CD4-positive, alpha-beta T cell (primary cell): ENCODE measurements at regions of chr11 and their contacts with region 1.

Region 1: DNA sequence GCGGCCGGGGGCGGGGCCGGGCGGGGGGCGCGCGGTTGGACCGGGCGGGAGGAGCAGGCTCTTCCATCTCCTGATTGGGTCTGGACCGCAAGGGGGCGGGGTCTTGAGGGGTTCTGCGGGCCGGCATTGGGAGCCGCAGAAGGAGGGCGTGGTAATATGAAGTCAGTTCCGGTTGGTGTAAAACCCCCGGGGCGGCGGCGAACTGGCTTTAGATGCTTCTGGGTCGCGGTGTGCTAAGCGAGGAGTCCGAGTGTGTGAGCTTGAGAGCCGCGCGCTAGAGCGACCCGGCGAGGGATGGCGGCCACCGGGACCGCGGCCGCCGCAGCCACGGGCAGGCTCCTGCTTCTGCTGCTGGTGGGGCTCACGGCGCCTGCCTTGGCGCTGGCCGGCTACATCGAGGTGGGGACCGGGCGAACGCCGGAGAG is at the start of gene APLP2:
- DNase-seq: peak; percentile 92 to 99 (median 97)
- ATAC-seq: peak; percentile 92
- H3K4me3 ChIP-seq: peak within 1 kb of the TSS; percentile 64
- H3K4me3 Mint-ChIP-seq: peak within 1 kb of the TSS; percentile 99
- H3K27ac ChIP-seq: peak within 1 kb of the TSS; percentile 58 to 78
- H3K27ac Mint-ChIP-seq: peak within 1 kb of the TSS; percentile 92
- H3K4me1 ChIP-seq: peaks cover 20% of the 10 kb centered on the region
- H3K4me1 Mint-ChIP-seq: peaks cover 27% of the 10 kb centered on the region
- H3K27me3 ChIP-seq: no peaks in the 10 kb centered on the region
- H3K27me3 Mint-ChIP-seq: peaks cover 4% of the 10 kb centered on the region
- CTCF ChIP-seq: no peak
- total RNA-seq, gene APLP2: 28.8 to 29.5 TPM

Region 2: DNA sequence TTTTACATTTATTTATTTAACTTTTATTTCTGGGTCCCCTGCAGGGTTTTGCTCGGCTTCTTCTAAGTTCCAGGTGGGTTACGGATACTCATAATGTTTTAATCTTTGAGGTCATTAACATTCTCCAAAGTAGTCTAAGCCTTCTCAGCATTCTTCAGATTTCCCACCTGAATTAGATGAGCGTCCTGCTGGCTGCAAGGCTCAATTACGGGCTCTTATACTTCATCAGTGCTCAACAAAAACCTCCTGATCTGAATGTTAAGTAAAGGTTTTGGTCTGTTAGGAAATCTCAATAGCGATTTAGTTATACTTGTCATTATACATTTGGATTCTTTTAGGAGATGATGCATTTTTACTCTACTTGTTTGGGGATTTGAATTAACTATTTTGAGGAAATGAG is 147.0 kb before region 1 on chr11:
- CTCF ChIA-PET with region 1: interaction called, 3 read pairs
- POLR2A ChIA-PET with region 1: no interaction called
- intact Hi-C with region 1: loop called (anchors 5 kb)
- DNase-seq: no peak
- ATAC-seq: no peak
- H3K4me3 ChIP-seq: no peak overlapping the region
- H3K4me3 Mint-ChIP-seq: no peak overlapping the region
- H3K27ac ChIP-seq: no peak overlapping the region
- H3K27ac Mint-ChIP-seq: no peak overlapping the region
- H3K4me1 ChIP-seq: peaks cover 7% of the 10 kb centered on the region
- H3K4me1 Mint-ChIP-seq: peaks cover 5% of the 10 kb centered on the region
- H3K27me3 ChIP-seq: no peaks in the 10 kb centered on the region
- H3K27me3 Mint-ChIP-seq: no peaks in the 10 kb centered on the region
- CTCF ChIP-seq: no peak

Region 3: GRCh38 chr11:129930296-129930695 is 139.4 kb before region 1 on chr11:
- CTCF ChIA-PET with region 1: no interaction called
- POLR2A ChIA-PET with region 1: no interaction called
- intact Hi-C with region 1: loop called in 1 of 2 experiments (anchors 5 kb)
- DNase-seq: peak in 2 of 14 experiments; percentile 39 to 48
- ATAC-seq: no peak
- H3K4me3 ChIP-seq: no peak overlapping the region
- H3K4me3 Mint-ChIP-seq: no peak overlapping the region
- H3K27ac ChIP-seq: peak overlapping the region in 1 of 2 donors; percentile 22
- H3K27ac Mint-ChIP-seq: no peak overlapping the region
- H3K4me1 ChIP-seq: no peaks in the 10 kb centered on the region
- H3K4me1 Mint-ChIP-seq: no peaks in the 10 kb centered on the region
- H3K27me3 ChIP-seq: no peaks in the 10 kb centered on the region
- H3K27me3 Mint-ChIP-seq: no peaks in the 10 kb centered on the region
- CTCF ChIP-seq: no peak

Region 4: GRCh38 chr11:129992161-129992944 is 77.3 kb before region 1 on chr11:
- CTCF ChIA-PET with region 1: interaction called, 3 read pairs
- POLR2A ChIA-PET with region 1: interaction called, 3 read pairs
- intact Hi-C with region 1: loop called in 1 of 2 experiments (anchors 1 kb)
- DNase-seq: peak; percentile 16 to 71 (median 36)
- ATAC-seq: peak; percentile 98
- H3K4me3 ChIP-seq: no peak overlapping the region
- H3K4me3 Mint-ChIP-seq: no peak overlapping the region
- H3K27ac ChIP-seq: no peak overlapping the region
- H3K27ac Mint-ChIP-seq: no peak overlapping the region
- H3K4me1 ChIP-seq: no peaks in the 10 kb centered on the region
- H3K4me1 Mint-ChIP-seq: peaks cover 29% of the 10 kb centered on the region
- H3K27me3 ChIP-seq: no peaks in the 10 kb centered on the region
- H3K27me3 Mint-ChIP-seq: no peaks in the 10 kb centered on the region
- CTCF ChIP-seq: peak; percentile 41

Region 5: GRCh38 chr11:130314750-130315285 is 245.1 kb after region 1 on chr11 and contains the start of gene ZBTB44:
- CTCF ChIA-PET with region 1: no interaction called
- POLR2A ChIA-PET with region 1: no interaction called
- intact Hi-C with region 1: loop called in 1 of 2 experiments (anchors 5 kb)
- DNase-seq: peak; percentile 87 to 95 (median 92)
- ATAC-seq: peak; percentile 78
- H3K4me3 ChIP-seq: peak within 1 kb of the TSS; percentile 80
- H3K4me3 Mint-ChIP-seq: peak within 1 kb of the TSS; percentile 93
- H3K27ac ChIP-seq: peak within 1 kb of the TSS; percentile 69 to 87
- H3K27ac Mint-ChIP-seq: peak within 1 kb of the TSS; percentile 97
- H3K4me1 ChIP-seq: peaks cover 16% of the 10 kb centered on the region
- H3K4me1 Mint-ChIP-seq: peaks cover 48% of the 10 kb centered on the region
- H3K27me3 ChIP-seq: no peaks in the 10 kb centered on the region
- H3K27me3 Mint-ChIP-seq: no peaks in the 10 kb centered on the region
- CTCF ChIP-seq: no peak
- total RNA-seq, gene ZBTB44: 33.9 to 41.6 TPM